Heart left ventricle (tissue), 16 donors: ENCODE measurements at regions of chr12 and their contacts with region 1.

Region 1: DNA sequence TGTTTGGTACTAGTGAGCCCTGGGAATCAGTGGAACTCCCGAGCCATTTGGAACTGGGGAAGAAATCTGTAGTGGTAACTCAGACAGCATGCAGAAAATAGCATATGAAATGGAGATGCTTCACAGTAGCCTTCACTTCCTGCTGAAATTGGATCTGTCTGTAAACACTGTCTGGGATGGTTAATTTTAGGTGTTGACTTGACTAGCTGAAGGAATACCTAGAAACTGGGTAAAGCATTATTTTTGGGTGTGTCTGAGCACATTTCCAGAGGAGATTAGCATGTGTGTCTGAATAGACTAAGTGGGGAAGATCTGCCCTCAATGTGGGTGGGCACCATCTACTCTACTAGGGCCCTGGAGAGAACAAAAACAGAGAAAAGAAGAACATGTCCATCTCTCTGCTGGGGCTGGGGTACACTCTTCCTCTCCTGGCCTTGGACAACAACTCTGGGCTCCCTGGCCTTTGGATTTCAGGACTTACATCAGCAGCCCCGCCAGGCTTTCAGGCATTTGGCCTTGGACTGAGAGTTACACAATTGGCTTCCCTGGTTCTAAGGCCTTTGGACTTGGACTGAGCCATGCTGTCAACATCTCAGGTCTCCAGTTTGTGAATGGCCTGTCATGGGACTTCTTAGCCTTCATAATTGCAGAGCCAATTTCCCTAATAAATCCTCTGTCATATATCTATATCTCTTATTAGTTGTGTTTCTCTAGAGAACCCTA is 14.0 kb upstream of the CRADD start:
- DNase-seq: no peak
- ATAC-seq: peak in 1 of 4 donors; percentile 66
- H3K4me3 ChIP-seq: no peak overlapping the region
- H3K27ac ChIP-seq: no peak overlapping the region
- H3K4me1 ChIP-seq: no peaks in the 10 kb centered on the region
- H3K27me3 ChIP-seq: no peaks in the 10 kb centered on the region
- CTCF ChIP-seq: no peak
- POLR2A ChIP-seq: no peak

Region 2: DNA sequence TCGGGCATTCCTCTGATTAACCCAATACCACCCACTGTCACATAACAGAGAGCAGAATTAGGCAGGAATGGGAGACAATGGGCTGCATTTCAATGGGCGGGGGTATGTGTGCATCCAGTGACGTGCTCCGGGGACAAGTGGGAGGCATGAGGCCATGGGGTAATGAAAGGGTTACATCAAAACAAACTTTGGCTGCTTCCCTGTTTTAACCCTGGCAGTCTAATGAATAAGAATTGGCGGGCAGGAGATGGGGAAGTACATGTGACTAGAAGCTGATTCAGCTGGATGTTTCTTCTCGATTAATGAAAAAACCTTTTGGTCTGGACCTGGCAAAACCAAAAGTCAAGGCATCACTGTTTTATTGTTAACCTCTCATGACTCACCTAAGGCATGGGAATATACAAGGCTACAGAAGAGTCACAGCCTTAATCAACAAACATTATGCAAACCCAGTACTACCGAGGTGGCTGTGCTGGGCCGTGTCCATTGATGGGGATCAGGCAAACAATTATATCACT is 46.5 kb before region 1 on chr12:
- intact Hi-C with region 1: loop called in 4 of 10 experiments (anchors 1 to 5 kb)
- DNase-seq: no peak
- ATAC-seq: no peak
- H3K4me3 ChIP-seq: no peak overlapping the region
- H3K27ac ChIP-seq: no peak overlapping the region
- H3K4me1 ChIP-seq: peaks cover 0 to 15% (median 0%) of the 10 kb centered on the region in 12 donors
- H3K27me3 ChIP-seq: no peaks in the 10 kb centered on the region
- CTCF ChIP-seq: no peak
- POLR2A ChIP-seq: no peak

Region 3: GRCh38 chr12:93624595-93625294 is 38.4 kb before region 1 on chr12:
- intact Hi-C with region 1: loop called in 5 of 10 experiments (anchors 5 kb)
- DNase-seq: no peak
- ATAC-seq: peak in 1 of 4 donors; percentile 58
- H3K4me3 ChIP-seq: no peak overlapping the region
- H3K27ac ChIP-seq: peak overlapping the region in 1 of 12 donors; percentile 38
- H3K4me1 ChIP-seq: peaks cover 0 to 9% (median 0%) of the 10 kb centered on the region in 12 donors
- H3K27me3 ChIP-seq: no peaks in the 10 kb centered on the region
- CTCF ChIP-seq: no peak
- POLR2A ChIP-seq: no peak